Activated B cell treated with CpG ODN at 0.5 μM for 24 hours (primary cell): ENCODE measurements at regions of chr1 and their contacts with region 1.

Region 1: DNA sequence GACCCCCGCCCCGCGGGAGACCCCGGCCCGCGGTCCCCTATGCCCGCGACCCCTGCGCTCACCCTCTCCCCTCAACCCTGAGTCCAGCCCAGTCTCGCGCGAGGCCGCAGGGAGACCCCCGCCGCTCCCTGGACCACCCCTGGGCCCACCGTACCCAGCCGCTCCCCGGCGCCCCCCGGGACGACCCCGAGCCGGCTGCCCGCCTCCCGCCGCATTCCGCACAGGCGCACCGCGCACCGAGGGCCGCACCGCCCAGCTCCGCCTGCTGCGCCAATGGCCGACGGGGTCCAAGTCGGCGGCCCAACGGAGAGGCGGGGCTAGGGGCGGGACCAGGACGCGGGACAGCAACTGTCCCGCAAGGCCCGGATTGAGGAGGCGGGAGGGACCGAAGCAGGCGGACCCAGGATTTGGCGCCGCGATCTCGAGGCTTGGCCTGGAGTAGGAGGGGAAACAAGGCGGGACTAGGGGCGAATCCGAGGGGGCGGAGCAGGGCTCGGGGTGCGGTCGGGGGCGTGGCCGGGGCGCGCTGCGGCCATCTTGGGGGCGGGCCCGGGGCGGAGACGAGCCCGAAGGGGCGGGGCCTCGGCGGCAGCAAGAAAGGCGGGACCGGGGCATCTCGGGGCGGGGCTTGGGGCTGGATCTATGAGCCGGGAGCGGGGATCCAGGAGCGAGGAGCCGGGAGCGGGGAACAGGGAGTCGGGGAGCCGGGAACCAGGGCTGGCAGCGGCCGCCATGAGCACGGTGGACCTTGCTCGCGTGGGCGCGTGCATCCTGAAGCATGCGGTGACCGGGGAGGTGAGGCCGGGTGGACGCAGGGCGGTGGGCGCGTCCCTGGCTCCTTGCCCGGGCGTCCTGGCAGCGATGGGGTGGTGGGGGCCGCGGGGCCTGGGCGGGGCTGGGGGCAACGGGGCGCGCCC is at the start of gene PRXL2B:
- DNase-seq: peak; percentile 99
- ATAC-seq: peak; percentile 74
- H3K4me3 Mint-ChIP-seq: peak within 1 kb of the TSS; percentile 92
- H3K27ac Mint-ChIP-seq: peak within 1 kb of the TSS; percentile 98
- H3K4me1 Mint-ChIP-seq: peaks cover 47% of the 10 kb centered on the region
- H3K27me3 Mint-ChIP-seq: no peaks in the 10 kb centered on the region
- CTCF ChIP-seq: no peak
- total RNA-seq, gene PRXL2B: 12.6 and 13.5 TPM in 2 replicates

Region 2: GRCh38 chr1:1777950-1778662 is 808.3 kb before region 1 on chr1 and contains the start of gene NADK:
- CTCF ChIA-PET with region 1: no interaction called
- POLR2A ChIA-PET with region 1: interaction called, 3 read pairs
- intact Hi-C with region 1: loop called (anchors 10 kb)
- DNase-seq: peak; percentile 90
- ATAC-seq: peak; percentile 29
- H3K4me3 Mint-ChIP-seq: peak within 1 kb of the TSS; percentile 85
- H3K27ac Mint-ChIP-seq: peak within 1 kb of the TSS; percentile 95
- H3K4me1 Mint-ChIP-seq: peaks cover 76% of the 10 kb centered on the region
- H3K27me3 Mint-ChIP-seq: no peaks in the 10 kb centered on the region
- CTCF ChIP-seq: no peak
- total RNA-seq, gene NADK: 106 and 122 TPM in 2 replicates

Region 3: DNA sequence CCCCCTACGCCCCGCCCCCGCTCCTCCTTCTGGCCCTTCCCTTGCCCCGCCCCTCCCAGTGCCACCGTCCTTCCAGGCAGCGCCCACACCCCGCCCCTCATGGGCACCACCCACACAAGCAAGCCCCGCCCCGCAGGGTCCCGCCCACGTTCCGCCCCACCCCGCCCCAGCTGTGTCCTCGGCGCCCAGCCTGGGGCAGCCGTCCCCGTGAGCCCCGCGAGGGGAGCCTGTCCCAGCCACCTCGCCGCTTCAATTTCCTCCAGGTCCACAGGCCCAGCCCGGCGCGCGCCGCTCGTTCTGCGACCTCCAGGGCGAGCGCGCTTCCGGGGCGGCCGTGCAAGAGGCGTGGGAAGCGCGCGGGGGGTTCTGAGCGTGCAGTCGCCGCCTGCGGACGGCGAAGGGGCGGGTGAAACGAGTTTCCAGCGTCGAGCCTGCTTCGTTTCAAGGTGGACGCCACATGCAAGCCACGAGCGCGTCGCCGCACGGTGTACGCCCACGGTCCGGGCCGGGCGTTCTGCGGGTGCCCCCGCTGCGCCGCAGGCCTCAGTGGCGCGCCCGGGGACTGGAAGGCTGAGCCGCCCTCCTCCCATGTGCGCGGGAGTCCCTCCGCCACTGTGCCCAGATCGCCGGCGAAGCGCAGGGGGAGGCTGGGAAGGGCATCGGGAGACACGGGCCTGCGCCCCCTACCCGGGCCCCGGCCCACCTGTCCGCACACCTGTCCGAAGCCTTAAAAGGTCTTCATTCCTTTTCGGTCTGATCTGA is 381.0 kb before region 1 on chr1:
- CTCF ChIA-PET with region 1: no interaction called
- POLR2A ChIA-PET with region 1: interaction called, 10 read pairs
- intact Hi-C with region 1: no loop called
- DNase-seq: peak; percentile 86
- ATAC-seq: peak; percentile 93
- H3K4me3 Mint-ChIP-seq: peak overlapping the region; percentile 72
- H3K27ac Mint-ChIP-seq: no peak overlapping the region
- H3K4me1 Mint-ChIP-seq: peaks cover 29% of the 10 kb centered on the region
- H3K27me3 Mint-ChIP-seq: no peaks in the 10 kb centered on the region
- CTCF ChIP-seq: no peak

Region 4: GRCh38 chr1:2412519-2413233 is 173.7 kb before region 1 on chr1 and contains the start of gene PEX10:
- CTCF ChIA-PET with region 1: interaction called, 4 read pairs
- POLR2A ChIA-PET with region 1: interaction called, 7 read pairs
- intact Hi-C with region 1: loop called (anchors 1 kb)
- DNase-seq: peak; percentile 100
- ATAC-seq: peak; percentile 93
- H3K4me3 Mint-ChIP-seq: peak within 1 kb of the TSS; percentile 83
- H3K27ac Mint-ChIP-seq: peak within 1 kb of the TSS; percentile 71
- H3K4me1 Mint-ChIP-seq: peaks cover 45% of the 10 kb centered on the region
- H3K27me3 Mint-ChIP-seq: no peaks in the 10 kb centered on the region
- CTCF ChIP-seq: no peak
- total RNA-seq, gene PEX10: 17.4 and 18.9 TPM in 2 replicates

Region 5: GRCh38 chr1:2556277-2556677 is 30.1 kb before region 1 on chr1 and contains the start of gene TNFRSF14:
- CTCF ChIA-PET with region 1: interaction called, 39 read pairs
- POLR2A ChIA-PET with region 1: interaction called, 224 read pairs
- intact Hi-C with region 1: loop called (anchors 1 kb)
- DNase-seq: peak; percentile 62
- ATAC-seq: peak; percentile 61
- H3K4me3 Mint-ChIP-seq: peak within 1 kb of the TSS; percentile 95
- H3K27ac Mint-ChIP-seq: peak within 1 kb of the TSS; percentile 96
- H3K4me1 Mint-ChIP-seq: peaks cover 48% of the 10 kb centered on the region
- H3K27me3 Mint-ChIP-seq: no peaks in the 10 kb centered on the region
- CTCF ChIP-seq: no peak
- total RNA-seq, gene TNFRSF14: 140 and 148 TPM in 2 replicates

Region 6: DNA sequence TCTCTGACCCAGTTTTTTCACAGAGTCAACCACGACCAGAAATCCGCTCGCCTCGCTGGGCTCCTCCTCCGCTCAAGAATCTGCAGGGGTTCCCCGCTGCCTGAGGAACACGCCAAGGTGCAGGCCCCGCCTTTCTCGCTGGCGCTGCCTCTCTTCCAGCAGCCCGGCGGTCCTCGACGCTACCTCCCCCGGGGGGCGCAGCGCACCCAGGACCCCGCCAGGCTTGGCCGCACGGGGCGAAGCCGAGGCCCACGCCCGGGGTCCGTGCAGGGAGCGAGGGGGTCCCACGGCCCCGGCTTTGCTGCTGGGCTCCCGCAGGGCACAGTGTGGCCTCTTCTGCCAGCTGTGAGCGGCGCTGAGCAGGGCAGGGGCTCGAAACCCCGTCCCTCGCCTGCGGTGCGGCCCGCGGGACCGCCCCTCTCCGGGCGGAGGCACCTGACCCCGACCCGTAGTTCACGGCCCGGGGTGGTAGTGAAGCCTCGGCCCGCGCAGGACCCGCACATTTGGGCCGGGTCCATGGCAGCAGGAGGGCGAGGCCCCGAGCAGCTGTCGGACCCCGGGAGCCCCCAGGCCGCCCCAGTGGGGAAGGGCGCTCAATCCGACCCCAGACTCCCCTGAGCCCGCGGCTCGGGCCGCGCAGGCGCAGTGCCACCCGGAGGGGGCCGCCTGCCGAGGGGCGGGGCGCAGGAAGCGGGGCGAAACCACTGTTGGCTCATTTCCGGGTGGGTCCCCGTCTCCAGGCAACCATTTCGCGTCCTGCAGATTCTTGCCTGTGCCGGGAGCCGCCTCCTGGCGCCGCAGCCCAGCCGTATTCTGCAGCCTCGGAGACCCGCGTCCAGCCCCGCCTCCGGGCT is 56.4 kb after region 1 on chr1:
- CTCF ChIA-PET with region 1: interaction called, 3 read pairs
- POLR2A ChIA-PET with region 1: interaction called, 14 read pairs
- intact Hi-C with region 1: loop called (anchors 1 kb)
- DNase-seq: peak; percentile 92
- ATAC-seq: peak; percentile 79
- H3K4me3 Mint-ChIP-seq: peak overlapping the region; percentile 80
- H3K27ac Mint-ChIP-seq: peak overlapping the region; percentile 73
- H3K4me1 Mint-ChIP-seq: peaks cover 11% of the 10 kb centered on the region
- H3K27me3 Mint-ChIP-seq: peaks cover 3% of the 10 kb centered on the region
- CTCF ChIP-seq: no peak

Region 7: GRCh38 chr1:2875707-2876561 is 289.5 kb after region 1 on chr1:
- CTCF ChIA-PET with region 1: no interaction called
- POLR2A ChIA-PET with region 1: no interaction called
- intact Hi-C with region 1: no loop called
- DNase-seq: no peak
- ATAC-seq: no peak
- H3K4me3 Mint-ChIP-seq: no peak overlapping the region
- H3K27ac Mint-ChIP-seq: no peak overlapping the region
- H3K4me1 Mint-ChIP-seq: no peaks in the 10 kb centered on the region
- H3K27me3 Mint-ChIP-seq: no peaks in the 10 kb centered on the region
- CTCF ChIP-seq: no peak